AG04450 (cell line): ENCODE measurements at regions of chr16 and their contacts with region 1.

Region 1: GRCh38 chr16:72072514-72073342 is 9.7 kb downstream of the HPR start:
- DNase-seq: no peak
- H3K4me3 ChIP-seq: no peak overlapping the region
- H3K27ac ChIP-seq: no peak overlapping the region
- H3K27me3 ChIP-seq: no peaks in the 10 kb centered on the region
- CTCF ChIP-seq: no peak

Region 2: DNA sequence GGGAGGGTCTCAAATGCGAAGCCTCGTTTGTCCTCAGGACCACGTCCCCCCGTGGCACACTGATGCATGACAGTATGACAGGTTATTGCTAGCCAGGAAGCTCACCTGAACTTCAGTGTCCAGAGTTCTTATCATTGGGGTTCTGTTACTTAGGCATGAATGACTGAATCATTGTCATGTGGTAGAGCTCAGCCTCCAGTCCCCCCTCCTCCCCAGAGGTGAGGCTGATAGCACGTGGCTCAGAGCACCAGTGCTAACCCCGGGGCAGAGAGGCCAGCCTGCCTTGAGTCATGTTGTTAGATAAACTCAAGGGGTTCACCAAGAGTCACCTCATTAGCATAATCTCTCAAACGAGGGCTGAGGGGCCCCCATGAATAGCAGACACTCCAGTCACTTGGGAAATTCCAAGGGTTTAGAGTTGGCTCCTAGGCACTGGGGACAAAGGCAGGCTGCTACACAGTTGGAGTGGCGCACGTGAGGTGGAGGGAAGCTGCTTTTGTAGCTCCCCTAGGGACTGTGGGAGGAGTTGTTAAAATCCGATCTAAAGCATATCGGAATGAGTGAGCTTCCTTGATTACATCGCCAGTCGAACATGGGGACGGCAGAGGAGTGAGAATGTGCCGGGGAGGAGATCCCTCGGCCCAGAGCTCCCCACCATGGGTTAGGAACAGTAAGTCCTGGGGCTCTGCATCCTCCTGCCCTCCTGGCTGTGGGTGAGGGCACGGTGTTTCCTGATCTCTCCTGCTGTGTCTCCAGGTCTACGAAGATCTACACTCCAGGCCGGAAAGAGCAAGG is 39.1 kb after region 1 on chr16:
- CTCF ChIA-PET with region 1: no interaction called
- POLR2A ChIA-PET with region 1: no interaction called
- DNase-seq: no peak
- H3K4me3 ChIP-seq: no peak overlapping the region
- H3K27ac ChIP-seq: no peak overlapping the region
- H3K27me3 ChIP-seq: no peaks in the 10 kb centered on the region
- CTCF ChIP-seq: no peak

Region 3: DNA sequence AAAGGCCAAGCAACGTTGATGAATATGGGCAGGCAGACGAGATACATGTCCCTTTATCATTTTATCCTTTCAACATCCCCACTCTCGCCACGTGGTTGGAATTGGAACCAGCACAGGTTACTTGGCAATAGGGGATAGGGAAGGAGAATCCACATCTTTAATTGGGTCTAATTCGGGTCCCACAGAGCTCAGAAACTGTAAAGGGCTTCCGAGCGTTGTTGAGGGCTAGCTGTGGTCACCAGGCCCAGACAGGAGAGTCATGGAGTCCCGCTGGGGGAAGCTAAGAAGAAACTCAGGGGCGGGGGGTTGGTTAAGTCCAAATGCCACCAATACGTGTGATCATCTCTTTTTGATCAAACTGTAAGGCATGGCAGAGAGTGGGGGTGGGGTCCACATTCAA is 1246.5 kb after region 1 on chr16:
- CTCF ChIA-PET with region 1: interaction called, 18 read pairs
- POLR2A ChIA-PET with region 1: no interaction called
- DNase-seq: no peak
- H3K4me3 ChIP-seq: no peak overlapping the region
- H3K27ac ChIP-seq: no peak overlapping the region
- H3K27me3 ChIP-seq: peaks cover 10% of the 10 kb centered on the region
- CTCF ChIP-seq: no peak